Activated T-helper 2 cell treated with anti-CD3 and anti-CD28 coated beads, Interferon-gamma antibody, Interleukin-2, Interleukin-4, amounts not matched to agents 10 μg/mL and 5 μg/mL and 100 μg/mL, durations not matched to agents 14 hours and 24 hours and 36 hours (primary cell): ENCODE measurements at regions of chr4 and their contacts with region 1.

Region 1: GRCh38 chr4:9602389-9602914 is 158.2 kb downstream of the DEFB131A start:
- DNase-seq: no peak
- H3K4me3 Mint-ChIP-seq: no peak overlapping the region
- H3K27ac Mint-ChIP-seq: no peak overlapping the region
- H3K4me1 Mint-ChIP-seq: peaks cover 46% of the 10 kb centered on the region
- H3K27me3 Mint-ChIP-seq: no peaks in the 10 kb centered on the region

Region 2: DNA sequence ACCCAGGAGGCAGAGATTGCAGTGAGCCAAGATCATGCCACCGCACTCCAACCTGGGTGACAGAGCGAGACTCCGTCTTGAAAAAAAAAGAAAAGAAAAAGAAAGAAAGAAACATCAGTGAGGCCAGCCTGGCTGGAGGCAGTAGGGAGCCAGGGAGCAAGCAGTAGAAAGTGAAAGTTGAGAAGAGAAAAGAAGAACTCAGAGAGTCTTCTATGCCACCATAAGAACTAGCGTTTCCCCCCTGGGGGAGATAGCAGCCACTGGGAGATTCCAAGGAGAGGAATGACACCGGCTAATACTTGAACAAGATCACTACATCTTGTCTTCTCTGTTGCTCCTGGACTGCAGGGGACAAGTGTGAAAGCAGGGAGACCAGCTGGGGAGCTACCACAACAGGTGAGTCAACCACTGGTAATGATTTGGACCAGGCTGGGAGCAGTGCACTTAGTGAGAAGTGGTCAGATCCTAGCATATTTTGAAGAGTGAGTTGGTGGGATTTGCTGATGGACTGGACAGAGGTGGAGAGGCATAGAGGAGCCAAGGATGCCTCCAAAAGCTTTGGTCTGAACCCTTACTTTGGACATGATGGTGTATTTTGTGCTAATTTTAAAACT is 385.4 kb after region 1 on chr4:
- intact Hi-C with region 1: no loop called
- DNase-seq: no peak
- H3K4me3 Mint-ChIP-seq: no peak overlapping the region
- H3K27ac Mint-ChIP-seq: no peak overlapping the region
- H3K4me1 Mint-ChIP-seq: no peaks in the 10 kb centered on the region
- H3K27me3 Mint-ChIP-seq: no peaks in the 10 kb centered on the region

Region 3: GRCh38 chr4:10180927-10181782 is 578.7 kb after region 1 on chr4:
- intact Hi-C with region 1: loop called (anchors 5 kb)
- DNase-seq: peak; percentile 30
- H3K4me3 Mint-ChIP-seq: no peak overlapping the region
- H3K27ac Mint-ChIP-seq: peak overlapping the region; percentile 87
- H3K4me1 Mint-ChIP-seq: peaks cover 38% of the 10 kb centered on the region
- H3K27me3 Mint-ChIP-seq: no peaks in the 10 kb centered on the region